Activated CD4-positive, alpha-beta memory T cell treated with anti-CD3 and anti-CD28 coated beads, Interleukin-2, amount 10 ng/mL, durations not matched to agents 7 days and 5 days (primary cell): ENCODE measurements at regions of chr6 and their contacts with region 1.

Region 1: DNA sequence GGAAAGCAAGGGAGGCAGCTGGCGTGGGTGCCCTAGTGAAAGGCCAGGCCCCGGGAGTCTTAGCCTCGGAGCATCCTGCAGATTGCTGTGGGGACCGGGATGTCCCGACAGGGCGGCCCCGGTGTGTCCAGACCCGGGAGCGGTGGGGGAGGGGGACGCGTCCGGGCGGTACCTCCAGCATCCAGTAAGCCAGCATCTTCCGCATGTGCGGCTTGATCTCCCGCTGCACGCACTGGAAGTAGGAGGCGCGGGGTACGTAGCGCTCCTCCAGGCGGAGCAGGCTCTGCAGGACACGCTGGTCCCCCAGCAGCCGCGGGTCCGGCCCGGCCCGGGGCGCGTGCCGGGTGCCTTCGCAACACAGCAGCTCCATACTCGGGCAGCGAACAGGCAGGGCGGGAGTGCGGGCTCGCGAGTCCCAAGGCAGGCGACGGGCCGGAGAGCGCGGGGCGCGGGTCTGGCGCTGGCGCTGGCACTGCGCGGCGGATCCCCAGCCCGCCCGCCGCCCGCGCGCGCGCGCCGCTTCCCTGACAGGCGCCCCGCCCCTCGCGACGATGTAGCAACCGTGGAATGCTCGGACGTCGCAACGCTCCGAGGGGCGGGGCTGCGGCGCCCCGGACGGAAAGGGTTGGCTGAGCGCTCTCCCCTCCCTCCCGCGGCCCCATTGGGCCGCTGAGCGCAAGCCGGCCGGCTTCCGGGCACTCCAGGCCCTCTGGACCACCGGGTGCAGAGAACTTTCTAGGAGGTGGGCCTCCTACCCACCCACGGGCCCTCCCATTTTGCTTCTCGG is at the start of gene CCND3:
- DNase-seq: peak; percentile 92
- H3K4me3 Mint-ChIP-seq: peak within 1 kb of the TSS; percentile 100
- H3K27ac Mint-ChIP-seq: peak within 1 kb of the TSS; percentile 93
- H3K4me1 Mint-ChIP-seq: peaks cover 38% of the 10 kb centered on the region
- H3K27me3 Mint-ChIP-seq: no peaks in the 10 kb centered on the region
- total RNA-seq, gene CCND3: 456 to 464 TPM

Region 2: DNA sequence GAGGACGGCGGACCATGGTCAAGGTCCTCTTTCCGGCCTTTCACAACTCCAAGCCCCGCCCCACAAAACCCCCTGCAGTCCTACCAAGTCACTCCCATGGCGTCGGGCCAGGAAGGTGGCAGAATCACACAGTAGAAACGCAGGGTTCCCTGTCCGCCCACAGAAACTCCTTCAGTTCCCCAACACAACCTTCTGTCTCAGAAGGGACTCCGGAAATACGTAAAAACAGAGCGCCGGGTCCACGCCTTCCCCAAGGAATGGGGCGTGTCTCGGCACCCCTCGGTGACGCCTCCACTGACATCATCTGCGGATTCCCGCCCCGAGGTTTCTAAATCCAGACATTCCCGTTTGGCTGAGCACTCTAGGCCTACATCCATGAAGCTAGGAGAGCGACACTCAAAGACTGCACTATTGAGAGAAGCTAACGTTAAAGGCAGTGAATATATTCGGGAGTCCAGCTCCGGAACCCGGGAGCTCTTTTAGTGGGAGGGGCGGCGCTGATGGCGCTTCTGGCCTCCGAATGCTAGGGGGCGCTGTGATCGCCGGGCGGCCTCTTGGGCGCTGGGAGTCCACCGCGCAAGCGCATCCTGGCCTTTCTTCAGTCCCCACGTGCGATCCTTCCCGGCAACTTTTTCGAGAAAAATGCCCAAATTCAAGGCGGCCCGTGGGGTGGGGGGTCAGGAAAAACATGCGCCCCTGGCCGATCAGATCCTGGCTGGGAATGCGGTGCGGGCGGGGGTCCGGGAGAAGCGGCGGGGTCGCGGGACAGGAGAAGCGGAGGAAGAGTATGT is 20.4 kb before region 1 on chr6 and contains the starts of genes BYSL and MED20:
- CTCF ChIA-PET with region 1: interaction called, 192 read pairs
- POLR2A ChIA-PET with region 1: interaction called, 191 read pairs
- DNase-seq: peak; percentile 95
- H3K4me3 Mint-ChIP-seq: peak within 1 kb of the TSS; percentile 95
- H3K27ac Mint-ChIP-seq: peak within 1 kb of the TSS; percentile 97
- H3K4me1 Mint-ChIP-seq: peaks cover 59% of the 10 kb centered on the region
- H3K27me3 Mint-ChIP-seq: no peaks in the 10 kb centered on the region
- total RNA-seq, gene BYSL: 23.9 to 24.8 TPM
- total RNA-seq, gene MED20: 21.4 to 21.9 TPM

Region 3: GRCh38 chr6:41970436-41970846 is 29.0 kb after region 1 on chr6:
- CTCF ChIA-PET with region 1: no interaction called
- POLR2A ChIA-PET with region 1: no interaction called
- DNase-seq: no peak
- H3K4me3 Mint-ChIP-seq: no peak overlapping the region
- H3K27ac Mint-ChIP-seq: peak overlapping the region; percentile 70
- H3K4me1 Mint-ChIP-seq: peaks cover 23% of the 10 kb centered on the region
- H3K27me3 Mint-ChIP-seq: no peaks in the 10 kb centered on the region

Region 4: GRCh38 chr6:42009966-42010891 is 68.8 kb after region 1 on chr6:
- CTCF ChIA-PET with region 1: interaction called, 5 read pairs
- POLR2A ChIA-PET with region 1: interaction called, 34 read pairs
- DNase-seq: peak; percentile 33
- H3K4me3 Mint-ChIP-seq: peak overlapping the region; percentile 43
- H3K27ac Mint-ChIP-seq: peak overlapping the region; percentile 82
- H3K4me1 Mint-ChIP-seq: peaks cover 67% of the 10 kb centered on the region
- H3K27me3 Mint-ChIP-seq: no peaks in the 10 kb centered on the region

Region 5: DNA sequence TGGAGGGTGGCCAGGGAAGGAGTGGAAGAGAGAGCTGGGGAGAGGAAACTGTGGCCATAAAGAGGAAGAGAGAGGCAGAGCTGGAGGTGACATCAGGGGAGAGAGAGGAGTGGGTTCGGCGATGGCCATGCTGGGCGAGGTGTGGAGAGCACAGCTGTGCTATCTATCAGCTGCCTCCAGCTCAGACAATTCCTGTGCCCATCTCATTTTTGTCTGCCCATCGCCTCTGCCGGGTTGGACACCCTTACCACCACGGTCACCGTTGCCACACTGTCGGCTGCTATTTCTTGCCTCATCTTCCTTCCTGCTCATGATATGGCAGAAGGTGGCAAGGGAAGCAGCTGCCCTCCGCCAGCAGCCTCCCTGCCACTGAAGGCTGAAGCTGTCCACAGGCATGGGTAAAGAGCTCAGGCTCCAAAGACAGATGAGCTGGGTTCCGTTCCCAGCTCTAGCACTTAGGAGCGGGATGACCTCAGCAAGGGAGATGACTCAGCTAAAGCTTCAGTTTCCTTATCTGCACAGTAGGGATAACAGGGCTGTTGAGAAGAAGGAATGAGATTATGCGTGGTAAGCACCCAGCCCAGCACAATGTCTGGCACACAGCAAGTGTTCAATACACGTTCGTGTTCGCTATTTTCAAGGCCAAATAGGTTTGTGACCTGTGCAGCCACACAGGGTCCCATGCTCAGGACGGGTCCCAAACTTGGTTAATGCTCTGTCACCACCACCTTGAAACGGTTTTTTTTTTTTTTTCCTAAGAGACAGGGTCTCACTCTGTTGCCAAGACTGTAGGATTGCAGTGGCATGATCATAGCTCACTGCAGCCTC is 87.0 kb after region 1 on chr6:
- CTCF ChIA-PET with region 1: interaction called, 8 read pairs
- POLR2A ChIA-PET with region 1: interaction called, 81 read pairs
- DNase-seq: no peak
- H3K4me3 Mint-ChIP-seq: peak overlapping the region; percentile 20
- H3K27ac Mint-ChIP-seq: peak overlapping the region; percentile 87
- H3K4me1 Mint-ChIP-seq: peaks cover 81% of the 10 kb centered on the region
- H3K27me3 Mint-ChIP-seq: no peaks in the 10 kb centered on the region